Transverse colon (tissue), 4 donors: ENCODE measurements at regions of chr5 and their contacts with region 1.

Region 1: DNA sequence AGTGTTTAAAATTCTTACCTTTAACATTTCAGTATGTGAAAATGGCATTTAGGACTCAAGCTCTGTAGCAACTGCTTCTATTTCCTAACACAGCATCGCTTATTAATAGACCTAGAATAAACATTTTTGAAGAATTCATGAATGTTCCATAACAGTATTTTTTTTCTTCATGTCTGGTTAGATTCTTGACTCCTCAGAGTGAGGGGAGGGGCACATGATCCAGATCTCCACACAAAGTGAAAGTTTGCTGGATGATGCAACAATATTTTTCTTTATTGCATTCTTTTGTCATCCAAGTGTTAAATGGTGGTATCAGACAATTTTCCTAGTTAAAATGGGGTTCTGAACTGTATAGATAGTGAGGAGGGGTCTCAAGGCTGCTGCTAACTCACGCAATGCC is 130.8 kb upstream of the MAN2A1 start:
- DNase-seq: no peak
- H3K4me3 ChIP-seq: no peak overlapping the region
- H3K27ac ChIP-seq: no peak overlapping the region
- H3K4me1 ChIP-seq: no peaks in the 10 kb centered on the region
- H3K27me3 ChIP-seq: no peaks in the 10 kb centered on the region
- CTCF ChIP-seq: no peak
- EP300 ChIP-seq: no peak
- POLR2A ChIP-seq: no peak

Region 2: DNA sequence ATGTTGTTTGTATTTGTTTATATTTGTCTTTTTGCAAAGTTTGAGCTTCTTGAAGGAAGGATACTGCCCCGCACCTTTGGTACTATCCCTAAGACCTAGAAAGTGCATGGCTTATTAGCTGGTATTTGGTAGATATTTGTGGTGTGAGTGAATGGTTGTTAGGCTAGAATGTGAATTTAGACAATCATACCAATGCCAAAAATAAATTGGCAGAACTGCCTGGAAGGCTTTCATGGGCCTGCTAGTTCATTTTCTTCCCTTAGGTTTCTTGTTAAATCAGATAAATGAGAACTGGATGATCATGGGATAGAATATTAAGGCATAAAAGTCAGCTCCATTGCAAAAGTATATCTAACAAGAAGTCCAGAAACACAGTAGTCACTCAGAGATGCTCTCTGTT is 1365.0 kb after region 1 on chr5:
- in situ Hi-C with region 1: no loop called
- intact Hi-C with region 1: loop called (anchors 5 kb)
- DNase-seq: no peak
- H3K4me3 ChIP-seq: no peak overlapping the region
- H3K27ac ChIP-seq: no peak overlapping the region
- H3K4me1 ChIP-seq: no peaks in the 10 kb centered on the region
- H3K27me3 ChIP-seq: no peaks in the 10 kb centered on the region
- CTCF ChIP-seq: no peak
- EP300 ChIP-seq: no peak
- POLR2A ChIP-seq: no peak